ENCODE measurements at regions of chr2 and their contacts with region 1.

Region 1: GRCh38 chr2:159712143-159712928 is at the start of gene MARCHF7:
- DNase-seq: peak; percentile 92 to 99 (median 95)

Region 2: GRCh38 chr2:158968396-158969161 is 743.8 kb before region 1 on chr2 and contains the start of gene TANC1:
- intact Hi-C with region 1: loop called (anchors 5 kb)
- DNase-seq: peak; percentile 83 to 98 (median 91)

Region 3: GRCh38 chr2:159131914-159132281 is 580.4 kb before region 1 on chr2:
- intact Hi-C with region 1: loop called (anchors 10 kb)
- DNase-seq: no peak

Region 4: GRCh38 chr2:159201360-159202063 is 510.8 kb before region 1 on chr2:
- intact Hi-C with region 1: loop called (anchors 10 kb)
- DNase-seq: no peak

Region 5: DNA sequence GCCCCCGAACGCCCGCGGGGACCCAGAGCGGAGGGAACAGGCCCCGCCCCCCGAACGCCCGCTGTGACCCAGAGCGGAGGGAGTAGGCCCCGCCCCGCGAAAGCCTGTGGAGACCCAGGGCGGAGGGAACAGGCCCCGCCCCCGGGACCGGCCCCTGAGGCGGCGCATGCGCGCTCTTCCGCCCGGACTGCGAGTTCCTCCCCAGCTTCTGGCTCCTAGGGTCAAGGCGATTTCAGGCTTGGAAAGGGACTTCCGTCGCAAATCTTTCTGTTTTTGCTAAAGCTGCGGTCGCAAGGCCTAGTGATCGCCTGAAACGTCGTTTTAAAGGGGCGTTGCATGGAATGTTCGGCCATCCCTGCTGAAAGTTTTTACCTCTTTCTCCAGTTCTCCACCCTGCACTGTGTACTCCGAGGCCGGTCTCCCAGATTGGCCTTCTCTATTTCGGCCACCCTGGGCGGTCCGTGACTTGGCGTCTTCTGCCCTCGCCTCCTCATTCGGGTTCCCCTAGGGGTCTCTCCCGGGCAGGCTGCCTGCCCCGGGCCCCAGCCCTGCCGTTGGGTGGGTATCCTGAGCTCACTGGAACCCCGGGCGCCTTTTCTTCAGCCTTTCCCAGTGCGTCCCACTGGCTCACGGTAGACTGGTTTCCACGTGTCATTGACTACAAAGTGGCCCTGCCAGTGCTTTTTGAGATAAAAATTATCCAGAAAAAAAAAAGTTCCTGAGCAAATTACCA is 425.5 kb before region 1 on chr2:
- intact Hi-C with region 1: loop called (anchors 5 kb)
- DNase-seq: peak; percentile 91 to 100 (median 98)

Region 6: DNA sequence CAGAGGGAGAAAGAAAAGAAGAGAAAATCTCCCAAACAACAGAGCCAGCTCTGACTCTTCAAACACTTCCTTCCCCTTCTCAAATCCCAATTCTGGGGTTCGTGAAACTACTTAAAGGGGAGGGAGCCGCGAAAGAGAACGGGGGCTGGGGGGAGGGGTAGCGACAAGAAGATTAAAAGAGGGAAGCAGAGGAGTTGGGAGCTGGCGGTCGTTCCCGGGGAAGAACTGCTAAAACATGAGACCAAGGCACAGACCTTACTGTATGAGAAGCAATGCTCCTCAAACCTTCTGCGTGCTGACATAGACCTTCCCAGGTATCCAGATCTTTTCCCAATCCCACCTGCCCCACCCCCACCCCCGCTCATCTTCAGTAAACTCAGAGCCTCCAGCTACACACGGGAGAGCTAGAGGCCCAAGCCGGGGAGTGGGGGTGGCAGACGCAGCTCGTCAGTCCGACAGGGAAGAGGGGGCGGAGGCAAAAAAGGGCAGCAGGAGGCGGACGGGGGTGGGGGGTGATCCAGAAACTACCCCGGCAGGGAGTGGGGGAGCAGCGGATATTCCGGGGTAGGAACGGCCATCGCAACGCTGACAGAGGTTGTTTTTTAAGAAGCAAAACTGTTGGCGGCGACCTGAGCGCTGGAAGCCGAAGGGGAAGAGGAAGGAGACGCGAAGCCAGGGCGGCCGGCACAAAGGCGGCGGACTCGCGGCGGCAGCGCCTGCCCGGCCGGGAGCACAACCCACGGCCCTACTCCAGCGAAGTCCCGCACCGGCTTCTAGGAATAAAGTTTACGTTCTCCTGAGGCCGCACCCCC is 97.0 kb before region 1 on chr2:
- intact Hi-C with region 1: loop called (anchors 2 kb)
- DNase-seq: peak; percentile 67 to 96 (median 78)

Region 7: DNA sequence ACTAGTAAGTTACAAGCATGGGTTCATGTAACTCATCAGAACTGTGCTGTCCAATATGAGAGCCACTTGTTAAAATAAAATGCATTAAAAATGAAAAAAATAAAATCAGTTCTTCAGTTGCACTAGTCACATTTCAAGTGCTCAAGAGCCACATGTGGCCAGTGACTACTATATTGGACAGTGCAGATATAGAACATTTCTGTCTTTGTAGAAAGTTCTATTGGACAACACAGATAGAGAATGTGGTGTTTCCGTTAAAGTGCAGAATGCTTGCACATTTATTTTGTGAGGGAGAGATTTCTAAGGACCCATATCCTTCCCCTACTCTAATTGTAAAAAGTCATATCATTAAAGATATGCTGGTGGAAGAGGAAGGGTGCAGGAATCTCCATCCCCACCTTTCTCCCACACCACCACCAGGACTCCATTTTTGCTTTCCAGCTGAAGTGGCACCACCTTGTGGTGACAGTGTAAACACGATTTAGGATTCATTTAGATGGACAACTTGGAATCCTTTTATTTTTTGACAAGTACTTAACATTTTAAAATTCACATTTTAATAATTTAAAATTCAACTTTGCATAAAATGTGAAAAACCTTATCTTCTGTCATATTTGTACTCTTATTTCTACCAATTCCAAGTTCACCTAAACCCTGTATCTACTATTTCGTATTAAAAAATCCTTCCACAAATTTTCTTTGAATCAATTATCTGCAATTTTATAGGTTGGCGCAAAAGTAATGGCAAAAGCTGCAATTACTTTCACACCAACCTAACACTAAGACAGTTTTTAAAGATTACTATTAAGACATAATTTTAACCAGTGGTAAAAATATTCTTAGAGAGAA is 95.1 kb after region 1 on chr2:
- intact Hi-C with region 1: loop called (anchors 10 kb)
- DNase-seq: peak in 4 of 10 donors; percentile 12 to 41 (median 22)